MCF 10A (cell line): ENCODE measurements at regions of chr7 and their contacts with region 1.

Region 1: DNA sequence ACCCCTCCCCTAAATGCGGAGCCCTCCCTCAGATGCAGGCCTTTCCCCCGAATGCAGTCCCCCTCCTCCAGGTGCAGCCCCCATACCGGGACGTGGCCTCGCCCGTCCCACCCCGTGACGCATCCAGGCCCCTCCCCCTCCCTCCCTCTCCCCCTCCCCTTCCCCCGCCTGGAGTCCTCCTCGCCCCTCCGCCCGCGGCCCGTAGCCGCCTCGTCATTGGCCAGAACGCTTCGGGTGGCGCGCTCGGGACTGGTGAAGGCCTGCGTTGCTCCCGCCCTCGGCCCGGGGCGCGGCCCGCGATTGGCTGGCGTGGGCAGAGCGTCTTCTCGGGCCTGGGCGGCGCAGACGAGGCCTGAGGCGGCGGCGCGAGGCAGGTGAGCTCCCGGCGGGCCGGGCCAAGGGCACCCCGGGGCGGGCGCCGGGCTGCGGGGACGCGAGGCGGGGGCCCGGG is 16.0 kb upstream of the SUN1 start:
- DNase-seq: peak; percentile 98
- H3K4me3 Mint-ChIP-seq: peak overlapping the region; percentile 86
- H3K27ac Mint-ChIP-seq: no peak overlapping the region
- H3K4me1 Mint-ChIP-seq: peaks cover 38% of the 10 kb centered on the region
- H3K27me3 Mint-ChIP-seq: no peaks in the 10 kb centered on the region
- CTCF ChIP-seq: no peak

Region 2: GRCh38 chr7:786472-787255 is 29.7 kb before region 1 on chr7:
- CTCF ChIA-PET with region 1: interaction called, 3 read pairs
- POLR2A ChIA-PET with region 1: interaction called, 4 read pairs
- intact Hi-C with region 1: loop called (anchors 1 kb)
- DNase-seq: peak; percentile 71
- H3K4me3 Mint-ChIP-seq: no peak overlapping the region
- H3K27ac Mint-ChIP-seq: peak overlapping the region; percentile 23
- H3K4me1 Mint-ChIP-seq: no peaks in the 10 kb centered on the region
- H3K27me3 Mint-ChIP-seq: no peaks in the 10 kb centered on the region
- CTCF ChIP-seq: peak; percentile 83

Region 3: DNA sequence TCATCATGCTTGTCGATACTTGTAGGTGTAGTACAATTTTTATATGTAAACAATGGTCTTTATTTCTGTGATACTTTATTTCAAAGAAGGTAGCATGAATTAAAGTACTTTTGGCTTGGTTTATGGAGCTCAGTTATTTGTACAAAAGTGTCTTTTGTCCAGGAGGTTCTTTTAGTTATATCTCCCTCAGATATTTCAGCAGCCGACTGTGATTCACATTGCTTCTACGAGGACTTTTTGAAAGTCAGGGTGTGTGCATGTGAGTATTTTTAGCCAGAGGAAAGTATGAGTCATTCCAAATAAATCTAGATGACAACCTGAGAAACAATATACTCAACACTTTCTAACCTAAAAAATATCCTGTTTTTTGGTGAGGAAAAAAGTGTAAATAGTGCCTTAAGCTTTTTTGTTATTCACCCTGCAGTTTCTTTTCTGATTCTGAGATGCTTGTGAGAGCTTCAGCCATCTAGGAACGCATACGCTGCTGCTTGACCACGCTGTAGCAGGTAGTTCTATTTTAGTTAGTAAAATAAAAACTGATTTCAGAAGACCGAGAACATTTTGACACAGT is 15.4 kb after region 1 on chr7:
- CTCF ChIA-PET with region 1: interaction called, 6 read pairs
- POLR2A ChIA-PET with region 1: interaction called, 185 read pairs
- intact Hi-C with region 1: loop called (anchors 1 kb)
- DNase-seq: peak; percentile 93
- H3K4me3 Mint-ChIP-seq: peak overlapping the region; percentile 66
- H3K27ac Mint-ChIP-seq: peak overlapping the region; percentile 100
- H3K4me1 Mint-ChIP-seq: peaks cover 34% of the 10 kb centered on the region
- H3K27me3 Mint-ChIP-seq: no peaks in the 10 kb centered on the region
- CTCF ChIP-seq: no peak

Region 4: GRCh38 chr7:867672-868486 is 51.6 kb after region 1 on chr7:
- CTCF ChIA-PET with region 1: interaction called, 12 read pairs
- POLR2A ChIA-PET with region 1: interaction called, 22 read pairs
- intact Hi-C with region 1: loop called (anchors 2 kb)
- DNase-seq: peak; percentile 78
- H3K4me3 Mint-ChIP-seq: peak overlapping the region; percentile 22
- H3K27ac Mint-ChIP-seq: peak overlapping the region; percentile 89
- H3K4me1 Mint-ChIP-seq: peaks cover 7% of the 10 kb centered on the region
- H3K27me3 Mint-ChIP-seq: no peaks in the 10 kb centered on the region
- CTCF ChIP-seq: no peak